ENCODE measurements at regions of chr12 and their contacts with region 1.

Region 1: GRCh38 chr12:102498471-102498870 is 18.1 kb upstream of the IGF1 start:
- DNase-seq: no peak

Region 2: DNA sequence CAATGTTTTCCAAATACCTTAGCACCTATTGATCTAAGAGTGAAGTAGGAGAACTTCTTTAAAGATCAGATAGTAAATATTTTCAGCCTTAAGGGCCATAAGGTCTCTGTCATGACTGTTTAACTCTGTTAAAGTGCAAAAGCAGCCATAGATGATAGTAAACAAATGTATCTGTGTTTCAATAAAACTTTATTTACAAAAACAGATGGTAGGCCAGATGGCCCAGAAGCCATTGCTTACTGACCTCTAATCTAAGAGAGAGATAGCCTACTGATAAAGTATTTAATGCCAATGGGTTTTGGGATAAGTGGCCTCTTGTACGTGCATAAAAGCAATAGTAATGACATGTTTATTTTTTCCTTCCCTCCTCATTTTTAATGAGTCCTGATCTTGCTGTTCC is 1615.2 kb before region 1 on chr12:
- intact Hi-C with region 1: loop called in 1 of 2 experiments (anchors 5 kb)
- DNase-seq: no peak

Region 3: DNA sequence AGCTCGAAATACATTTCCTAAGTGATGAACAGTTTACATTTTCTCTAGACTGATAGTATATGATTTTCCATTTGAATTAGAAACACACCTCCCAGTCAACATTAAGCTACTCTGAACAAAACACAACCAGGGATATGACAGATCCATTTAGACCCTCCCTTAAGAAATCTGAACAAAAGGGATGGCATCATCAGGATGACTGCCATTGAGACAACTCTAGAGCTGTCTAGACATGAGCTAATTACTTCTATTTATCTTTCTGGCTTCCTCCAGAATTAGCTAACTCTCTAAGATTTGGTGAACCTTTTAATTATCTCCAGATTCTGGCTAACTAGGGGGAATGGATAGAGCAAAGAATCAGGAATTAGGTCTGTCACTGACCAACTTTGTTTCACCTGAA is 74.8 kb after region 1 on chr12:
- intact Hi-C with region 1: no loop called
- DNase-seq: no peak